CD8-positive, alpha-beta T cell (primary cell): ENCODE measurements at regions of chr2 and their contacts with region 1.

Region 1: GRCh38 chr2:96536445-96537065 is at the start of gene ARID5A:
- DNase-seq: peak; percentile 84 to 95 (median 92)
- ATAC-seq: peak; percentile 48
- H3K4me3 ChIP-seq: peak within 1 kb of the TSS; percentile 81
- H3K4me3 Mint-ChIP-seq: peak within 1 kb of the TSS; percentile 98
- H3K27ac ChIP-seq: peak within 1 kb of the TSS; percentile 93 to 97
- H3K27ac Mint-ChIP-seq: peak within 1 kb of the TSS; percentile 100
- H3K4me1 ChIP-seq: peaks cover 43% of the 10 kb centered on the region
- H3K4me1 Mint-ChIP-seq: peaks cover 43% of the 10 kb centered on the region
- H3K27me3 ChIP-seq: no peaks in the 10 kb centered on the region
- H3K27me3 Mint-ChIP-seq: no peaks in the 10 kb centered on the region
- CTCF ChIP-seq: peak; percentile 48
- total RNA-seq, gene ARID5A: 408 to 413 TPM

Region 2: DNA sequence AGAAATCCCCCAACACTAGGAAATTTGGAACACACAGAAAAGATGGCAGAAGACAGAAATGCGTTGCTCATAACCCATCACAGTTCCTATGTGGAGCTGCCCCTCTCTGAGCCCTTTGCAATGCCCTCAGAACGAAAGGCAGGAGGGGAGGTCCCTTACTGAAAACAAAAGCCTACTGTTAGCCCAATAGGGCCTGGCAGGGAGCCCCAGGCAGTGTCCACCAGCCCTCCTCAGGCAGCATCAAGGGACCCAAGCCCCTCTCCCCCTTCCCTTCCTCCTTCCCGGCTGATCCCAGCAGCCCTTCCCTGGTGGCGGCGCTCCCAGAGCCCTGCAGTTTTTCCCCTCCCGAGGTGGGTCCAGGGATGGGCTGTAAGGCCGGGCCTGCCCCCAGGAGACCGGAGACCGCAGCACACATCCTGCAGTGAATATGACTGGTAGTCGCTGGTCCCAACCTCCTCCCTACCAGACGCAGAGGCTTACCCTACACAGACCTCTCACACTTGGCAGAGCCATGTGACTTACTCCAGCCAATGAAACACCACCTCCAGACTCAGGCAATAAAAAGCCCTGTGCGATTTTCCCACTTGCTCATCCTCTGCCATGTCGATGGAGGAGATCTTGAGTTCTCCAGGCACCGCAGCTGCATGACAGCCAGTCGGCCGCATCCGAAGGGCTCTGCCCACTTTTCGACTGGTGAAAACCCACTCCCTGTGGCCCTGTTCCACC is 371.9 kb before region 1 on chr2:
- CTCF ChIA-PET with region 1: no interaction called
- POLR2A ChIA-PET with region 1: no interaction called
- intact Hi-C with region 1: loop called in 1 of 2 experiments (anchors 5 kb)
- DNase-seq: peak in 6 of 9 experiments; percentile 52 to 91 (median 80)
- ATAC-seq: peak; percentile 72
- H3K4me3 ChIP-seq: peak overlapping the region; percentile 25 to 37
- H3K4me3 Mint-ChIP-seq: peak overlapping the region; percentile 78
- H3K27ac ChIP-seq: peak overlapping the region; percentile 63 to 95
- H3K27ac Mint-ChIP-seq: peak overlapping the region; percentile 98
- H3K4me1 ChIP-seq: peaks cover 47% of the 10 kb centered on the region
- H3K4me1 Mint-ChIP-seq: peaks cover 60% of the 10 kb centered on the region
- H3K27me3 ChIP-seq: no peaks in the 10 kb centered on the region
- H3K27me3 Mint-ChIP-seq: no peaks in the 10 kb centered on the region
- CTCF ChIP-seq: no peak

Region 3: DNA sequence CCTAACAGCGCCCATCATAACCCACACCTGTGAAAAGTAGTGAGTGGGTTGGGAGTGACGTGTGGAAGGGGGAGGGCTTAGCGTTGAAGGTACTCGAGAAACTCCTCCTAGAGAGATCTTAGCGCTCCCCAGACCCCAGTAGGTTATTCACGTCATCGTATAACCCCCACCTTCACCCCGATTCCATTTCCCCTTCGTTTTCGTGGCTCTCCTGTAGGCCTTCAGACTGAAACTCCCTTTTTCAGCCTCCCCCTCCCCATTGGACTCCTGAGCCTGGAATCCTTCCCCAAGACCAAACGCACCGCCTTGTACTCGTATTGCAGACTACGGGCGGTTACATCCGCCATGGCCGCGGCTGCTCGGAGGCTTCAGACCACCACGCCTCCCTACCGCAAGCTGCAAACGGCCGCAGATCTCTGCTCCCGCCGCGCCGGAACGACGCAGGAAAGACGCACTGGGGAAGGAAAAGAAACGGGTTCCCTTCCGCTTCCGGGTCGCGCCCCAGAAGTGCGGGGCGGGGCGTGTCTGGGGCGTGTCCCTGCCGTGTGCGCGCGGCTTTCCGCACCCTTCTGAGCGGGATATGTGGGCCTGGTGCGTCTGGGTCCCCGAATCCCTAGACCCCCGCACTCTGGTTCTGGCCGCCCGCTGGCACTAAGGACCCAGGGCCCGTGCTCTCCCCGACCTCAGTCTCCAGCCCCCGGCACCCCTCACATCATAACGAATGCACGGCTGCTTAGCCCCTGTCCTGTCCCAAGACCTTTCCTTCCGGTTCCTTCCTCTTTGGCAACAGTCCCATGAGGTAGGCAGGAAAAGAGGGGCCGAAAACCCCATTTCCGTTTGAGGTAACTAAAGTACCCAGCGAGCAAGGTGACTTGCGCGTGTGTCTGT is 231.2 kb before region 1 on chr2 and contains the start of gene SNRNP200:
- CTCF ChIA-PET with region 1: interaction called, 3 read pairs
- POLR2A ChIA-PET with region 1: no interaction called
- intact Hi-C with region 1: loop called (anchors 1 to 5 kb)
- DNase-seq: peak; percentile 78 to 97 (median 91)
- ATAC-seq: peak; percentile 82
- H3K4me3 ChIP-seq: peak within 1 kb of the TSS; percentile 84 to 95
- H3K4me3 Mint-ChIP-seq: peak within 1 kb of the TSS; percentile 100
- H3K27ac ChIP-seq: peak within 1 kb of the TSS; percentile 96 to 98
- H3K27ac Mint-ChIP-seq: peak within 1 kb of the TSS; percentile 100
- H3K4me1 ChIP-seq: peaks cover 39% of the 10 kb centered on the region
- H3K4me1 Mint-ChIP-seq: peaks cover 55% of the 10 kb centered on the region
- H3K27me3 ChIP-seq: no peaks in the 10 kb centered on the region
- H3K27me3 Mint-ChIP-seq: no peaks in the 10 kb centered on the region
- CTCF ChIP-seq: no peak
- total RNA-seq, gene SNRNP200: 318 to 348 TPM

Region 4: DNA sequence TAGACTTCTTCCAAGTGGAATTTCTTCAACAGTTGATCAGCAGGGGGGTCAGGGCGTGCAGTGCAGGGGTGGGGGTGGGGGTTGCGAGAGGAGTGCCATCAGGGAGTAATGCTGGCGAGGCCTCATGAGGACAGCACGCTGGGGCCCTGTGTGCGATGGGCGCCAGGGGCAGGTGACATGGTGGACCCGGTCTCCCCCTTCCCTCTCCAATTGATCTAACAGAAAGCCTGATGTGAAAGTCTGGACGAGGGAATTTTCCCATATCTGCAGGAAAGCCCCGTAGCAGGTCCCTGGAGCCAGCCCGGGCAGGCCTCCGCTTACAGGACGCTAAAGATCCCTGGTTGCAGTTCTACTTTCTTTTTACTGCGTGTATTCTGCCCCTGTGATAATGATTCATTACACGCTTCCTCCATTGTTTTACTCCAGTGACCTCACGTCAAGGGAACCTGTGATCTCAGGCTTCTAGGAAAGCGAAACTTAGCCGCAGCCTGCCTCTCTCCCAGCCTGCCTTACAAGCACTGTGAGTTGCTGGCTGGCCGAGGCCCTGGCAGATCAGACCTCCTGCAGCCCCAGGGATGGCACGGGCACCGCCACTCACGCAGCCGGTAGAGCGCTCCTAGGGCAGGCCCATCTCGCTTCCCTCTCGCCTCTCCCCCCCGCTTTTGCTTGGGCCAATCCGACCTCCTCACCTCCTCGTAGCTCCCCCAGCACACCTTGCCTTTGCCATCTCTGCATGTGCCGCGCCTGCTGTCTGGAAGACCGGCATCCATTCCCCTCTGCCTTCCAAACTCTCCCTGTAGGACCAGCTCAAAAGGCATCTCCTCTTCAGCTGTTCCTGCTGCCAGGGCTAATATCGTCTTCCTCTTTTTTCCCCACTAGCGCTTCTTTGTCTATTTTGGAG is 50.6 kb before region 1 on chr2:
- CTCF ChIA-PET with region 1: no interaction called
- POLR2A ChIA-PET with region 1: no interaction called
- intact Hi-C with region 1: loop called in 1 of 2 experiments (anchors 2 kb)
- DNase-seq: peak; percentile 48 to 91 (median 77)
- ATAC-seq: peak; percentile 93
- H3K4me3 ChIP-seq: peak overlapping the region; percentile 56 to 59
- H3K4me3 Mint-ChIP-seq: peak overlapping the region; percentile 88
- H3K27ac ChIP-seq: peak overlapping the region; percentile 73 to 88
- H3K27ac Mint-ChIP-seq: peak overlapping the region; percentile 97
- H3K4me1 ChIP-seq: peaks cover 18% of the 10 kb centered on the region
- H3K4me1 Mint-ChIP-seq: peaks cover 22% of the 10 kb centered on the region
- H3K27me3 ChIP-seq: no peaks in the 10 kb centered on the region
- H3K27me3 Mint-ChIP-seq: no peaks in the 10 kb centered on the region
- CTCF ChIP-seq: no peak

Region 5: DNA sequence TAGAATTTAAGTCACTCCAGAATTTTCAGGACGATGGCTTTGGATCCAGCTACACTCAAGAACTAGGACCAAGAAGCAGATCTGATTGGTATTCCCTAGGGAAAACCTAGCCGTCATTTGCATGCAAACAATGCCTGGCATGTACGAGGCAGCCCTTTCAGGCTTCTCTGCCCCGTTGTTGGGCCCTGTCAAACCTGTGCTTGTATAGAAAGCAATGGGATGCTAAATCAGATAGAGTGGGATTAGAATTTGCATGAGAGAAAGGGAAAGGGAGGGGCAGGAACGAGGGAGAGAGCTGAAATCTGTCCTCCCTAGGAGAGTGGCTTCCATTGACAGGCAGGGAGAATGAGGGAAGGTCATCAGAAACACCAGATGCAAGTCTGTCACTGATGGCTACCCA is 28.6 kb after region 1 on chr2:
- CTCF ChIA-PET with region 1: no interaction called
- POLR2A ChIA-PET with region 1: no interaction called
- intact Hi-C with region 1: no loop called
- DNase-seq: no peak
- ATAC-seq: no peak
- H3K4me3 ChIP-seq: no peak overlapping the region
- H3K4me3 Mint-ChIP-seq: no peak overlapping the region
- H3K27ac ChIP-seq: no peak overlapping the region
- H3K27ac Mint-ChIP-seq: no peak overlapping the region
- H3K4me1 ChIP-seq: no peaks in the 10 kb centered on the region
- H3K4me1 Mint-ChIP-seq: no peaks in the 10 kb centered on the region
- H3K27me3 ChIP-seq: no peaks in the 10 kb centered on the region
- H3K27me3 Mint-ChIP-seq: no peaks in the 10 kb centered on the region
- CTCF ChIP-seq: no peak

Region 6: GRCh38 chr2:96638144-96639121 is 101.9 kb after region 1 on chr2 and contains the start of gene KANSL3:
- CTCF ChIA-PET with region 1: no interaction called
- POLR2A ChIA-PET with region 1: interaction called, 7 read pairs
- intact Hi-C with region 1: loop called in 1 of 2 experiments (anchors 5 kb)
- DNase-seq: peak; percentile 79 to 95 (median 88)
- ATAC-seq: peak; percentile 85
- H3K4me3 ChIP-seq: peak within 1 kb of the TSS; percentile 71 to 95
- H3K4me3 Mint-ChIP-seq: peak within 1 kb of the TSS; percentile 93
- H3K27ac ChIP-seq: peak within 1 kb of the TSS; percentile 83 to 91
- H3K27ac Mint-ChIP-seq: peak within 1 kb of the TSS; percentile 96
- H3K4me1 ChIP-seq: peaks cover 24% of the 10 kb centered on the region
- H3K4me1 Mint-ChIP-seq: peaks cover 32% of the 10 kb centered on the region
- H3K27me3 ChIP-seq: no peaks in the 10 kb centered on the region
- H3K27me3 Mint-ChIP-seq: peaks cover 2% of the 10 kb centered on the region
- CTCF ChIP-seq: no peak
- total RNA-seq, gene KANSL3: 58.8 to 60.4 TPM